ENCODE measurements at regions of chr6 and their contacts with region 1.

Region 1: GRCh38 chr6:150891888-150892485 is 26.5 kb downstream of the MTHFD1L start:
- DNase-seq: peak; percentile 81
- H3K4me3 ChIP-seq: no peak overlapping the region
- H3K27ac ChIP-seq: no peak overlapping the region
- H3K4me1 ChIP-seq: peaks cover 24% of the 10 kb centered on the region
- H3K27me3 ChIP-seq: no peaks in the 10 kb centered on the region
- CTCF ChIP-seq: peak; percentile 91

Region 2: DNA sequence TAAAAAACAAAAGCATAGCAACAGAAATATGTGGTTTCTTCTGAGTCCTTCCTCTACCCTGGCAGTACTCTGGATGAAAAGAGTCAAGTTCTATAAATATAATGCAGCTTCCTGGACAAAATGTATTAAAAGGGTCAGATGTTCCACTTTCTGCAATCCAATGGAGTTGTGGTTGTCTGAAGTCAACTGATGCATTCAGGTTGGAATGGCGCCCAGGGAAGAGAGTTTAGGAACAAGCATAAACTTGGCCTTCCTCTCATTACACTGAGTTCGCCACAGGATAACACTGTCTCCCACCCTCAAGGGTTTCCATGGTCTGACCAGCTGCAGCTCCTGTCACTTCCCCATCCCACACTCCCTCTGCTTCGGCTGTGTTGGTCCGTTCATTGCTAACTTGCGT is 225.9 kb before region 1 on chr6:
- CTCF ChIA-PET with region 1: no interaction called
- POLR2A ChIA-PET with region 1: no interaction called
- intact Hi-C with region 1: no loop called
- DNase-seq: no peak
- H3K4me3 ChIP-seq: no peak overlapping the region
- H3K27ac ChIP-seq: no peak overlapping the region
- H3K4me1 ChIP-seq: peaks cover 20% of the 10 kb centered on the region
- H3K27me3 ChIP-seq: no peaks in the 10 kb centered on the region
- CTCF ChIP-seq: no peak

Region 3: GRCh38 chr6:151060096-151060765 is 168.2 kb after region 1 on chr6:
- CTCF ChIA-PET with region 1: no interaction called
- POLR2A ChIA-PET with region 1: no interaction called
- intact Hi-C with region 1: no loop called
- DNase-seq: no peak
- H3K4me3 ChIP-seq: no peak overlapping the region
- H3K27ac ChIP-seq: no peak overlapping the region
- H3K4me1 ChIP-seq: peaks cover 8% of the 10 kb centered on the region
- H3K27me3 ChIP-seq: no peaks in the 10 kb centered on the region
- CTCF ChIP-seq: no peak

Region 4: DNA sequence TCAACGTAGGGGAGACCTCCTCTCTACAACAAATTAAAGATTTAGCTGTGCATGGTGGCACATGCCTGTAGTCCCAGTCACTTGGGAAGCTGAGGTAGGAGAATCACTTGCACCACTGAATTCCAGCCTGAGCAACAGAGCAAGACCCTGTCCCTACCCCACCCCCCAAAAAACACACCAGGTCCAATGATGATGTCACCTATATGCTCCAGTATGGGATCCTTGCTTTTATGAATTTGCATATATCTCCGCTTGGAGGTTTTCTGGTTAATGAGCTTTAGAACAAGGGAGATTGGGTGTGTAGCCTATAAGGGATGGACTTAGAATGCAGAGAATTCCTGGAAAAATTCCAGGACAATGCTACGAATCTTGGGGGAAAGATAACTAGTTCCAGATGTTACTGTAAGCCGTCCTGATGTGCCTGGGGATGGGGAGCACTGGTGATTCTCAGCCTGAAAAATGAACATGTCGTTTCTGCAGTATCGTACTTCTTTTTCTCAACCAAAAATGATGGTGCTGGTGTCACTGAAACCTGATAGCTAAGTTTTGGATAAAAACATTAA is 438.2 kb after region 1 on chr6:
- CTCF ChIA-PET with region 1: interaction called, 50 read pairs
- POLR2A ChIA-PET with region 1: no interaction called
- intact Hi-C with region 1: loop called (anchors 1 kb)
- DNase-seq: peak; percentile 78
- H3K4me3 ChIP-seq: no peak overlapping the region
- H3K27ac ChIP-seq: no peak overlapping the region
- H3K4me1 ChIP-seq: peaks cover 49% of the 10 kb centered on the region
- H3K27me3 ChIP-seq: no peaks in the 10 kb centered on the region
- CTCF ChIP-seq: no peak

Region 5: GRCh38 chr6:151475653-151476523 is 583.9 kb after region 1 on chr6:
- CTCF ChIA-PET with region 1: no interaction called
- POLR2A ChIA-PET with region 1: no interaction called
- intact Hi-C with region 1: loop called (anchors 5 kb)
- DNase-seq: peak; percentile 72
- H3K4me3 ChIP-seq: no peak overlapping the region
- H3K27ac ChIP-seq: no peak overlapping the region
- H3K4me1 ChIP-seq: no peaks in the 10 kb centered on the region
- H3K27me3 ChIP-seq: no peaks in the 10 kb centered on the region
- CTCF ChIP-seq: peak; percentile 87